H1 (cell line): ENCODE measurements at regions of chr7 and their contacts with region 1.

Region 1: DNA sequence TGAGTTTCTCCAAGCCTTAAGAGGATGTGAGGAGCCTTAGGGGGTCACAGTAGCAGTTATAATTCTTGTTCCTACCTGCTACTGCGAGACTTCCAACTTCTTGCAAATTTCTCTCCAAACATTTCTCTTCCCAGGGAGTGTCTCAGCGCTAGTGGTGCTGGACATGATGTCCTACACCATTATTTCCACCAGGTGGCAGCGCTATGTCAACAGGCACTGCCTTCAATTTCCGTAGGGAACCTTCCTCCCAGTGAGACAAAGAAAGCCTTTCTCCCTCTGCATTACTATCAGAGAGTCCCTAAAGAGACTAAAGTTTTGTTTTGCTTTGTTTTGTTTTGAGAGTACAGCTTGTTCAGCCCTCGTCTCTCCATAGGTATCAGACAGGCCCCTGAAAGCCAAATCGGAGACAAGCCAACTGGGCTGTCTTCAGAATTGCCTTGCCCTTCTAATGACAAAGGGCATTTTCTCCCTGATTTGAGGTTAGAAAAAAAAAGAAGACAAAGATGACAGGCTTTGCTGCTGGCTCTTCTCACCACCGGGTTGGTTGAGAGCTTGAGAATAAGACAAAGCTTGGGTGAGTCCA is 44.2 kb upstream of the GGCT start:
- DNase-seq: peak in 1 of 2 experiments; percentile 66
- H3K4me3 ChIP-seq: no peak overlapping the region; a peak in 1 of 8 replicates
- H3K27ac ChIP-seq: no peak overlapping the region
- H3K4me1 ChIP-seq: peaks cover 0 to 8% (median 1%) of the 10 kb centered on the region in 4 experiments; a peak in 2 of 7 replicates
- H3K27me3 ChIP-seq: no peaks in the 10 kb centered on the region
- CTCF ChIP-seq: peak; percentile 71 to 89 (median 80)
- EP300 ChIP-seq: no peak
- POLR2A ChIP-seq: no peak
- RAD21 ChIP-seq: peak; percentile 75 to 78

Region 2: GRCh38 chr7:30276203-30276900 is 272.5 kb before region 1 on chr7:
- CTCF ChIA-PET with region 1: interaction called, 13 read pairs
- POLR2A ChIA-PET with region 1: no interaction called
- DNase-seq: peak; percentile 15 to 63
- H3K4me3 ChIP-seq: no peak overlapping the region
- H3K27ac ChIP-seq: no peak overlapping the region
- H3K4me1 ChIP-seq: peaks cover 0 to 1% (median 0%) of the 10 kb centered on the region in 4 experiments; a peak in 1 of 7 replicates
- H3K27me3 ChIP-seq: no peaks in the 10 kb centered on the region
- CTCF ChIP-seq: peak; percentile 58 to 89 (median 87)
- EP300 ChIP-seq: no peak
- POLR2A ChIP-seq: no peak
- RAD21 ChIP-seq: peak; percentile 95 to 96

Region 3: GRCh38 chr7:30521532-30521931 is 27.3 kb before region 1 on chr7:
- CTCF ChIA-PET with region 1: interaction called, 10 read pairs
- POLR2A ChIA-PET with region 1: no interaction called
- DNase-seq: no peak
- H3K4me3 ChIP-seq: no peak overlapping the region
- H3K27ac ChIP-seq: no peak overlapping the region
- H3K4me1 ChIP-seq: no peaks in the 10 kb centered on the region
- H3K27me3 ChIP-seq: no peaks in the 10 kb centered on the region
- CTCF ChIP-seq: no peak
- EP300 ChIP-seq: no peak
- POLR2A ChIP-seq: no peak
- RAD21 ChIP-seq: no peak

Region 4: GRCh38 chr7:30531286-30531685 is 17.6 kb before region 1 on chr7:
- CTCF ChIA-PET with region 1: interaction called, 23 read pairs
- POLR2A ChIA-PET with region 1: interaction called, 3 read pairs
- DNase-seq: no peak
- H3K4me3 ChIP-seq: no peak overlapping the region
- H3K27ac ChIP-seq: no peak overlapping the region
- H3K4me1 ChIP-seq: no peaks in the 10 kb centered on the region
- H3K27me3 ChIP-seq: no peaks in the 10 kb centered on the region
- CTCF ChIP-seq: no peak
- EP300 ChIP-seq: no peak
- POLR2A ChIP-seq: no peak
- RAD21 ChIP-seq: no peak